ENCODE measurements at regions of chr2 and their contacts with region 1.

Region 1: DNA sequence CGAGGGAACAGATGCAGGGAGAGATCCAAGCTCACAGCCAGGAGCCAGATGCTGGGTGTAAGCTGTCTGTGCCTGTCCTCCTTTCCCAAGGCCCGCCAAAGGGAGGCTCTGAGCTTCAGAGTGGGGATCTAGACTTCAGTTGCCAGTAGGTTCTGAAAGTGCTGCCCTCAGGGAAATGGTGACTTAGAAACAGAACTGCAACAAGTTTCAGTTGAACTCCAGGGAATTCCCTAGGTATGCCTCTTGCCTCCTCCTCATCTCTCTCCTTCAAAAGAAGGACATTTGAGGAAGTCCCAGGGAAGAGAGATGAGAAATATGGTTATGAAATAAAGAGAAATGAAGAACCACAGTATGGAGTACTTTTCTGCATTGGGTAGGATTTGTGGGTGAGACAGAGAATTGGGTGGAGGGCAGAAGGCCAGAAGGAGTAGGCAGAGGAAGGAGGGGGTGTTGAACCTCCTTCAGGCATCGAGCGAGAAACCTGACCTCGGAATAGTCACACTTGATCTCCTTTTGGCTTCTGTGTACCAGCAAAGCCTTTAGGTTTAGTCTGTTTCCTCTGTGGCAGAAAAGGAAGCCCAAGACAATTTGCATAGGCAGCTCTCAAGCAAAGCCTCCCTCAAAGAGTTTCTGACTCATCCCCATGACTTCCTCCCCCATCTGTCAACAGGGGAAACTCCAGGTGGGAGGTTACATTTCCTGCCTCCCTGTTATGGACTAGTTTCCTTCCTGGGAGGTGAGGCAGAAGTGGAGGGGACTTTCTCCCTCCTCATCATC is 45.7 kb downstream of the QPCT start:
- DNase-seq: no peak
- H3K4me3 ChIP-seq: no peak overlapping the region
- H3K4me1 ChIP-seq: no peaks in the 10 kb centered on the region
- H3K27me3 ChIP-seq: no peaks in the 10 kb centered on the region

Region 2: DNA sequence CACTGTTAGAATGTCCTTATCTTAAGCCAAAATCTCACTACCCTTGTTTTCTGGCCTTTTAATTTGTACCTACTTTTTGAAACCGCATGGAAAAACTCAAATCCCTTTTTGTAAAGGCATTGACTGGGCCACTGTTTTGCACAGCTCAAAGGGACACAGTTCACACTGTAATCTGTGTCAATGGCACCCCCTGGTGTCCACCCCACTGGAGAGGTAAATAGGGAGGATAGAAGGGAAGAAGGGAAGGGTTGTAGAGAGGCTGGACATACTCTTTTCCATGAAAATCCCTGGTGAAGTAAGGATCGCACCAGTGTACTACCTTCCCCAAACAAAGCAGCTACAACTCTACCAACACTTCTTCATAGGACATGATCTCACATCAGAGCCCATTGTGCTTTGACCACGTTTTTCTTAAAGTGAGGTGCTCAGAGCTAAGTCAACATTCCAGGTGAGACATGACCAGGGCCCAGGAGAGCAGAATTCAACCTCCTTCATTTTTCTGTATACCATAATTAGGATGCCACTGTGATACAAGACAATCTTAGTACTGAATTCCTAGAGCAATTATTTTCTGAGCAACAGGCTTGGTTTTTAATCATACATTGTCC is 442.5 kb after region 1 on chr2:
- in situ Hi-C with region 1: loop called (anchors 5 kb)
- DNase-seq: peak; percentile 84 to 94
- H3K4me3 ChIP-seq: no peak overlapping the region
- H3K4me1 ChIP-seq: no peaks in the 10 kb centered on the region
- H3K27me3 ChIP-seq: no peaks in the 10 kb centered on the region

Region 3: GRCh38 chr2:37877457-37878315 is 487.5 kb after region 1 on chr2:
- in situ Hi-C with region 1: loop called (anchors 10 kb)
- DNase-seq: peak; percentile 46 to 66
- H3K4me3 ChIP-seq: no peak overlapping the region
- H3K4me1 ChIP-seq: no peaks in the 10 kb centered on the region
- H3K27me3 ChIP-seq: 0 out of 2 replicates have a peak, but pooled peaks cover 4% of the 10 kb centered on the region

Region 4: DNA sequence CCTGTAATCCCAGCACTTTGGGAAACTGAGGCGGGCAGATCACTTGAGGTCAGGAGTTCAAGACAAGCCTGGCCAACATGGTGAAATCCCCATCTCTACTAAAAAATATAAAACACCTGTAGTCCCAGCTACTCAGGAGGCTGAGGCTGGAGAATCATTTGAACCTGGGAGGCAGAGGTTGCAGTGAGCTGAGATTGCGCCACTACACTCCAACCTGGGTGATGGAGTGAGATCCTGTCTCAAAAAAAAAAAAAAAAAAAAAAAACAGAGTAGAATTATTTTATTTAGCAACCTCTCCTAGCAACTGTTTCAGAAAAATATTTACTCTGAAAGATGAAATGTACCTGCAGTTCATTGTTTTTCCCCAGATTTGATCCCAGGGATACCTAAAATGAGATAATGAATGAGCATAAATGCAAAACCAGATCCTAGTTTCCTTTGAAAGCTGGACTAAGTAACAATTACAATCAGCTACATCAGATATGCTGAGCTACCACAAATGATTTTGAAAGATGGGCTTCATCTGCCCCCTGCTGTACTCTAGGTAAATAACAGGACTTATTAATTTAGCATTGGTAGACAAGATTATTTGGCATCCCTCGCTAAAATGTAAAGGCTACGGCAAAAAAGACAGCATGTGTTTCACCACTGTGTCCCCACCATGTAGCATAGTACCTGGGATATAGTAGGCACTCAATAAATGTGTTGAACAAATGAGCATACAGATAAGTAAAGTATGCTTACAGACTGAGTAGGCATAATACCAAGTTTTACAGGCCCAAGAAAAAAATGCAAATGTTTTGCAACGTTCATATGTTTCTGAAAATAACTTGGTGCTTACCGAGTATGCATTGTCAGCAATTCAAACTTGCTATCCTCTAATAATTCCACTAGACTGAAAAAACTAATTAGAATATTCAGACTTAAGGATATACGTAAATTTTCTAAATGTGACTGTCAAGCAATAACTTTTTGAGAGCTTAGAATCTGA is 884.4 kb after region 1 on chr2:
- in situ Hi-C with region 1: loop called (anchors 25 kb)
- DNase-seq: peak; percentile 59 to 74
- H3K4me3 ChIP-seq: no peak overlapping the region
- H3K4me1 ChIP-seq: peaks cover 17% of the 10 kb centered on the region
- H3K27me3 ChIP-seq: no peaks in the 10 kb centered on the region

Region 5: GRCh38 chr2:38690499-38691294 is 1300.5 kb after region 1 on chr2:
- in situ Hi-C with region 1: no loop called
- DNase-seq: no peak
- H3K4me3 ChIP-seq: no peak overlapping the region
- H3K4me1 ChIP-seq: no peaks in the 10 kb centered on the region
- H3K27me3 ChIP-seq: no peaks in the 10 kb centered on the region